ENCODE measurements at regions of chr2 and their contacts with region 1.

Region 1: GRCh38 chr2:141611-142010 is 95.3 kb upstream of the FAM110C start:
- DNase-seq: no peak
- H3K4me3 ChIP-seq: no peak overlapping the region
- H3K27ac ChIP-seq: no peak overlapping the region
- H3K4me1 ChIP-seq: peaks cover 0 to 7% (median 4%) of the 10 kb centered on the region in 4 experiments; a peak in 5 of 7 replicates
- H3K27me3 ChIP-seq: no peaks in the 10 kb centered on the region
- CTCF ChIP-seq: no peak
- EP300 ChIP-seq: no peak
- POLR2A ChIP-seq: no peak
- RAD21 ChIP-seq: no peak

Region 2: DNA sequence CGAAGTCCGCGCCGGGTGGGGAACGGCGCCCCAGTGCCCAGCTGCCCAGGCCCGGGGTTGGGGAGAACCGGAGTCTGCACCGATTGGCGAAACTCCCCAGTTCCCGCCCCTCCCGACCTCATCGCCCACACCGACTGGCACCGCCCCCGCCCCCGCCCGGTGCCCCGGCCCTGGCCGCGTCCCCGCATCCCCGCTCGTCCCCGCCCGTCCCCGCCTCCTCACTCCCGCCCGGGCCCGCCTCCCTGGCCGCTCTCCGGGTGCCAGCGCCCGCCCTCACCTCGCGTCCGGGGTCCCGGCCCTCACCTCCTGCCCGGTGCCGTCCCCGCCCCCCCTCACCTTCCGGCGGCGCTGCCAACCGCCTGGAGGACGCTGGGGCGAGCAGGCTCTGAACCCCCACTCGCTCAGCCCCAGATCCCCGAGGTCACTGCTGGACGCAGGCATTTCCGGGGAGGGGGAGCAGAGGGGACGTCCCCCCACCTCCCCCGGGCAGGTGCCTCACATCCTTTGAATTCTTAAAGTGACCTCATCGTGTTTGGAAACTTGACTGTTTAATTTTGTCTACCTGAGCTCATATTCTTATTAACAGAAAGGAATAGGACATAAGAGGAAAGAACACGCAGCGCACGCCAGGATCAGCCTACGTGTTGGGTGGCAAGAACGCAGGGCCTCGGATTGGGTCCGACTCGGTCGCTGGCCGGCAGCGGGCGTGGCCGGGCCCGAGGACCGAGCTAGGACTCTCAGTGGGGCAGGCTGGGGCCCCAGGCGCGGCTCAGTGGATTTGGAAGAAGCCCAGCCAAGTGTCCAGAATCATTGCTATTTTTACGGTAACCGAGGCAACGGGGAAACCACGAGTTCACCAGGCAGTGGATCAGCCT is 94.9 kb before region 1 on chr2 and contains the start of gene FAM110C:
- CTCF ChIA-PET with region 1: interaction called, 15 read pairs
- POLR2A ChIA-PET with region 1: no interaction called
- DNase-seq: peak in 1 of 2 experiments; percentile 83
- H3K4me3 ChIP-seq: peak within 1 kb of the TSS; percentile 66 to 82 (median 74)
- H3K27ac ChIP-seq: peak within 1 kb of the TSS; percentile 14; the same call in 1 of the 2 replicates
- H3K4me1 ChIP-seq: peaks cover 6 to 11% (median 11%) of the 10 kb centered on the region in 4 experiments; a peak in 6 of 7 replicates
- H3K27me3 ChIP-seq: peaks cover 0 to 12% (median 5%) of the 10 kb centered on the region in 4 experiments; a peak in 4 of 7 replicates
- CTCF ChIP-seq: no peak
- EP300 ChIP-seq: no peak
- POLR2A ChIP-seq: 0 out of 3 replicates have a peak, but pooled peaks of 1 of the 2 experiments have one; percentile 33
- RAD21 ChIP-seq: 0 out of 4 replicates have a peak, but pooled peaks of 1 of the 2 experiments have one; percentile 7
- total RNA-seq, gene FAM110C: 13.2 and 15.4 TPM in 2 replicates

Region 3: DNA sequence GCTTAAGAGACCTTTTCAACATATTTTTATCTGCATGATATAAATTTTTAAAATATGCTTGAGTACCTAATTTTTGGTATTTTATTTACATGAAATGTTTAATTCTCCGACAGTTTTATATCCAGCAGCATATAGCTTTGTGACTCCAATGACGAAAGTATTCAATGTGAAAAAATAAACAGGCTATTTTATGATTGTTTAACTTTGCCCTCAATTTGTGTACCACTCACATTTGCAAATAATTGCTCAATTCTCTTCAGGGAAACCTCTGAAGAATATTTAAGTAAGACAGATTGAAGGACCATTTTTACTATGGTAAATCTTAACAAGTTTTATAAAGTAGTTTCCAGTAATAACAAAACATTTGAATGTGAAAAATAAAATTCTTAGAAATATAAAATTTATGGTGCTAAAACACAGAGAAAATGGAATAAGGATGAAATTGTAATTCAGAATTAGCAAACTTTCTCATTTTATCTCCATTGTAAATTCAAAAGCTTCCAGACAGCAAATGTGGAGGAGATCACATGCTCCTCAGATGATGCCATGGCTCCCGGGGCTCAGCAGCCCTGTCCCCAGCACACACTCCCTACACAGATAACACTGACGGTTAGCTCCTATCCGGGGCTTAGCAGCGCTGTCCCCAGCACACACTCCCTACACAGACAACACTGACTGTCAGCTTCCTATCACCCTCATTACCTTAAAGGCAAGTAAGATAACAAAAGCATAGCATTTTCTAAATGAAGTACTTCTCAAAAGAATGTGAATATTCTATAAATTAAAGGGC is 82.6 kb after region 1 on chr2:
- CTCF ChIA-PET with region 1: no interaction called
- POLR2A ChIA-PET with region 1: no interaction called
- DNase-seq: no peak
- H3K4me3 ChIP-seq: no peak overlapping the region
- H3K27ac ChIP-seq: no peak overlapping the region
- H3K4me1 ChIP-seq: no peaks in the 10 kb centered on the region
- H3K27me3 ChIP-seq: no peaks in the 10 kb centered on the region
- CTCF ChIP-seq: no peak
- EP300 ChIP-seq: no peak
- POLR2A ChIP-seq: no peak
- RAD21 ChIP-seq: no peak

Measured in H1 (cell line).